Uterus (tissue), 4 donors: ENCODE measurements at regions of chr5 and their contacts with region 1.

Region 1: DNA sequence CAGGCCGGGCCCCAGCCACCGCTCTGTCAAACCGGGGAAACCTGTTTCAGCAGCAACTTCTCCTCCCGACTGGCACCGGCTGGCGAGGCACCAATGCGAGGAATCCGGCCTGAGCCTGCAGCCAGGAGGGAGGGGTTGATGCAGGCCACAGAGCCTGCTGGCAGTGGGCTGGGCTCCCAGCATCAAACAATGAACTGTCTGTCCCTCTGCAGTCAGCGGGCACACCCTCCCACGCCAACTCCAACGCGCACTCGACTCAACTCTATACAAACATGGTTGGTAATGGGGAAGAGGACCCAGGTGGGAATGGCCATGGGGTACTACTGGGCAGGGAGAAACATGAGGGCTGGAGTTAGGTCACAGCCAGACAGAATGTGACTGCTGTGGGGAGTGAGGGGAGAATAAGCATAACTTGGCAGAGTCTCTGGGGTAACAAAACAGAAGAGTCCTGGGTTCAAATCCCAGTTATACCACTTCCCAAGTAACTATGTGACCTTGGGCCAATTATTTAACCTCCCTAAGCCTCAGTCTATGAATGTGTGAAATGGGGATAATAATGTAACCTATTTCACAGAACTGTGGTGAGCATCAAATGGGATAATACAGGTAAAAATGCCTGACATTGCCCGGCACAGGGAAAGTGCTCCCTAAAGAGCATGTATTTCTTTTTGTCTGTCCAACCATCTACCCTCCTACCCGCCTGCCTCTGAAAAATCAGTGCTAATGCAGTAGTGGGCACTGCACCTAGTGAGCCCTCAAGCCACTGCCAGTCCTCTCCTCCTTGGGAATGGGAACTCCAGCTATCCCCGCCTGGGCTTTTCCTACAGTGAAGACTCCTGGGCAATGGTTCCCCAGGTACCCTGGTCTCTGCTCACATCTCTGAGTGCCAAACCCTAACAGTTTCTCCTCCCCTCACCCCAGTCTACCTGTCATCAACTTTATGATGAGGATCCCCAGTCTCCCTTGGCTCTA is 11.8 kb downstream of the PCDH1 start:
- DNase-seq: no peak
- H3K4me3 ChIP-seq: no peak overlapping the region
- H3K27ac ChIP-seq: no peak overlapping the region
- H3K4me1 ChIP-seq: no peaks in the 10 kb centered on the region
- H3K27me3 ChIP-seq: no peaks in the 10 kb centered on the region
- CTCF ChIP-seq: no peak
- POLR2A ChIP-seq: peak in 1 of 2 donors; percentile 12

Region 2: DNA sequence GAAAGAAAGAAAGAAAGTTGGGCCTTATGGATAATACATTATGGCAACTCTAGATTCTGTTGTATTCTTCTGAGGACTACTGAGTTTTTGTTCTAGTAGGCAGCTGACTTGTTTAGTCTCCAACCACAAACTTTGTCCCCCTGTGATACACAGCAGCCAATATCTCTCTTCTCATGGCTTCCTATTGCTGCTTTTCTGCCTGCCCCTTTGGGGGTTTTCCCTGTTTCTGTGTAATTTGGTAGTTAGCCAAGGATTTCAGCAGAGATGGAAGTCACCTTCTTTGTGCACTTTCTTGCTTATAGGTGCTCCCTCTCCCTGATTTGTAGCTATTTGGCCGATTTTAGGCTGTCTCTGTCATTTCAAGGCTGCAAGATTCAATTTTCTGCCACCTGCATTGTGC is 709.9 kb after region 1 on chr5:
- intact Hi-C with region 1: loop called (anchors 5 kb)
- DNase-seq: no peak
- H3K4me3 ChIP-seq: no peak overlapping the region
- H3K27ac ChIP-seq: no peak overlapping the region
- H3K4me1 ChIP-seq: no peaks in the 10 kb centered on the region
- H3K27me3 ChIP-seq: no peaks in the 10 kb centered on the region
- CTCF ChIP-seq: no peak
- POLR2A ChIP-seq: no peak